ENCODE measurements at regions of chr7 and their contacts with region 1.

Region 1: GRCh38 chr7:2680792-2681490 is 7.1 kb upstream of the AMZ1 start:
- DNase-seq: peak; percentile 88 to 91 (median 89)
- ATAC-seq: peak; percentile 88 to 97 (median 92)
- H3K4me3 ChIP-seq: no peak overlapping the region
- H3K27ac ChIP-seq: no peak overlapping the region
- H3K4me1 ChIP-seq: no peaks in the 10 kb centered on the region
- H3K27me3 ChIP-seq: no peaks in the 10 kb centered on the region
- CTCF ChIP-seq: peak; percentile 78 to 87 (median 81)
- POLR2A ChIP-seq: no peak

Region 2: DNA sequence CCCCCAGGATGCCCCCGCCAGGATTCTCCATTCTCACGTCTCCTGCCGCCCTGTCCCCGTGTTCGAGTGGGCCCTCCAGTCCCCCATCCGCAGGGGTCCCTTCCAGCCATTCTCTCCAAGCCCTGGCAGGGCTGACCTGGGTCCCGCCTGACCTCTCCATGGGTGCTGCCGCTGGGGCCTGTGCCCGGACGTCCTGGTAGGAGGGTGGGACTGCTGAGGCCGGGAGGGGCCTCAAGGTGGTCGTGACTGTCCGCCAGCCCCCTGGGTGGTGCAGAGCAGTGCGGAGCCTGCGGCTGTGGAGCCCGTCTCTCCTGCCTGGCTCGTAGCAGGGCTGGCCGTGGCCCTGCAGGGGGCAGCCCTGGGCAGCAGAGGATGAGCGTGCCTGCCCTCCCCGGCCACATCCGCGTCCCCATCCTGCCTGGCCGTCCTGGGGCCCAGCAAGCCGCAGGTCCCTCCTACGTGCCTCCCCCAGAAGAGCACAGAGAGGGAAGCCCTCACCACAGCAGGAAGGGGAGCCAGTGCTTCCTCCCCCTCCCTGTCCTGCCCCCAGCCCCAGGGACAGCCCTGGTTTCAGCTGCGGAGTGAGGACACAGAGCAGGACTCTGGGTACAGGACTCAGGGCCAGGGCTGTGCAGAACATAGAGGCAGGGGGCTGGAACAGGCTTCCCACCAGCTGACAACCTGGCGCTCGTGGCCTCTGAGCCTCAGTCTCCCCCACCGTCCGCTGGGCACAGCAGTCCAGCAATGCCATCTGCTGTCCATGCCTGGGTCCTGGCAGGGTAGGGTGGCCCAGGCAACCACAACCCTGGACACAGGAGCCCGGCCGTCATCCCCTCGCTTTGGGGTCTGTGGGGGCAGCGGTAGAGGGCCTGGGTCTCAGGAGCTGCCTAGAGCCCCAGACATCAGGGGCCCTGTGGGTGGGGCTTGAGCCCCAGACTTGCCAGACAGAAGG is 203.2 kb before region 1 on chr7:
- intact Hi-C with region 1: loop called (anchors 10 kb)
- DNase-seq: peak in 2 of 3 donors; percentile 66 to 75
- ATAC-seq: peak; percentile 82 to 89 (median 84)
- H3K4me3 ChIP-seq: no peak overlapping the region
- H3K27ac ChIP-seq: no peak overlapping the region
- H3K4me1 ChIP-seq: peaks cover 0 to 15% (median 3%) of the 10 kb centered on the region in 4 donors
- H3K27me3 ChIP-seq: no peaks in the 10 kb centered on the region
- CTCF ChIP-seq: peak; percentile 60 to 81 (median 73)
- POLR2A ChIP-seq: no peak

Region 3: DNA sequence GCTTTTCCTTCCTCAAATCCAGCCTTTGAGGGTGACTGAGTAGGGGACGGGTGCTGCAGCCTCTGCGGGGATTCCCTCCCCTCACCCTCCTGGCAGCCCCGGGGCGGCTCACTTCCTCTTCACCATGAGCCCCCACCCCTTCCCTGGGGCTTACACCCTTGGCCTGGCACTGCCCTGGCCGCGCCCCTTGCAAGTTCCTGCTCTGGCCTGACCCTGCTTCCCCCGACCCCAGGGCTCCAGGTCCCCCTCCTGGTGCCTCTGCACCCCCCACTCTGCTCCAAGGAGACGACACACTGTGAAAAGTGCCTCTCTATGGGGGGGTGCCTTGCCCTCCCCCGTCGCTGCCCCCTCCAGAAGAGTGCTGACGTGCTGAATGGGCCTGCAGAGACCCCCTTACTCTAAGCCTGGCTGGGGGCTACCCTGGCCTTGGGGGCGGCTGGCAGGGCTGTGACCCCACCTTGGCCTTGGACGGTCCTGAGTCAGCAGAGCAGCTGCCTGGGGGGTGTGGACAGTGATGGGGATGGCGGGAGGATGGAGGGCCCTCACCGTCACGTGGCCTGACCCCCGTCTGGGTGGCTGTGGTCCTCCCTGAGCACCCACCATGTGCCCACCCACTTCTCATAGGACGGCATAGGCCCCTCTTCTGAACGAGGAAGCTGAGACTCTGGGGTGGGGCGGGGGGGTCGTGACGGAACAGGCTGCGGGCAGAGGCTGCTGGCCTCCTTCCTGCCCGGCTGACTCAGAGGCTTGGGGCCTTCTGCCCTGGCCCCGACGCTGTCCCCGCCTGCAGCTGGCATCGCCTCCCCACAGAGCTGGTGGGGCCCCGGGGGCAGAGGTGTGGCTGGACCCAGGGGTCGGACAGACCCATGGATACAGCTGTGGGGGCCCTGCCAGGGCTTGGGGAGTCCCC is 151.5 kb before region 1 on chr7:
- intact Hi-C with region 1: no loop called
- DNase-seq: peak in 2 of 3 donors; percentile 73 to 87
- ATAC-seq: peak; percentile 57 to 68 (median 60)
- H3K4me3 ChIP-seq: no peak overlapping the region
- H3K27ac ChIP-seq: peak overlapping the region in 2 of 3 donors; percentile 51 to 53
- H3K4me1 ChIP-seq: no peaks in the 10 kb centered on the region
- H3K27me3 ChIP-seq: no peaks in the 10 kb centered on the region
- CTCF ChIP-seq: no peak
- POLR2A ChIP-seq: no peak

Region 4: DNA sequence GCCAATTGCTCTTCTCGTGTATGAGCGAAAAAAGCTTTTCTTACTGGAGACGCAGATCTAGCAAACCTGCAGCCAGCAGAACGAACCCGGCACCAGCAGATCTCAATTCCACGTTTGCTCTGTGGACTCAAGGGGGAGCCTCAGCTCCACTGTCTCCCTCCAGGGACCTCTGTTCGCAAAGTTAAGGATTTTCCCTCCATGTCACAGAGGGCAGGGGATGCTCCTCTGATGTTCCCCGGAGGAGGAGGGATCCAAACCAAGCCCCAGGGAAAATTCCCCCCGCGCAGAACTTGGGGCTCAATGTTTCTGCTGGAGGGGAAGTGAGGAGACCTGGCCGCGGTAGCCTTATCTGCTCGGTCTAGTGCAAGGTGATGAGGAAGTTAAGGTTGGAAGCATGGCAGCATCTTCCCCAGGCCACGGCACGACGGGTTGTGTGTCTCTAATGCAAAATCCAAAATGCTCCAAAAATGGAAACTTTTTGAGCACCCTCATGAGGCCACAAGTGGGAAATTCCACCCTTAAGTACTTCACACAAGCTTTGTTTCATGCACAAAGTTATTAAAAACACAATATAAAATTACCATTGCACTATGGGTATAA is 113.2 kb before region 1 on chr7:
- intact Hi-C with region 1: loop called (anchors 10 kb)
- DNase-seq: no peak
- ATAC-seq: peak; percentile 58 to 72 (median 68)
- H3K4me3 ChIP-seq: no peak overlapping the region
- H3K27ac ChIP-seq: no peak overlapping the region
- H3K4me1 ChIP-seq: peaks cover 0 to 8% (median 2%) of the 10 kb centered on the region in 4 donors
- H3K27me3 ChIP-seq: no peaks in the 10 kb centered on the region
- CTCF ChIP-seq: peak; percentile 38 to 45 (median 42)
- POLR2A ChIP-seq: no peak